A673 (cell line): ENCODE measurements at regions of chr10 and their contacts with region 1.

Region 1: GRCh38 chr10:63268798-63269503 is 135.8 kb downstream of the NRBF2 start:
- DNase-seq: peak; percentile 95
- H3K4me3 ChIP-seq: peak overlapping the region; percentile 56
- H3K27ac ChIP-seq: peak overlapping the region; percentile 90
- H3K4me1 ChIP-seq: peaks cover 18% of the 10 kb centered on the region
- H3K27me3 ChIP-seq: no peaks in the 10 kb centered on the region
- CTCF ChIP-seq: peak; percentile 41; the same call in 1 of the 2 replicates

Region 2: DNA sequence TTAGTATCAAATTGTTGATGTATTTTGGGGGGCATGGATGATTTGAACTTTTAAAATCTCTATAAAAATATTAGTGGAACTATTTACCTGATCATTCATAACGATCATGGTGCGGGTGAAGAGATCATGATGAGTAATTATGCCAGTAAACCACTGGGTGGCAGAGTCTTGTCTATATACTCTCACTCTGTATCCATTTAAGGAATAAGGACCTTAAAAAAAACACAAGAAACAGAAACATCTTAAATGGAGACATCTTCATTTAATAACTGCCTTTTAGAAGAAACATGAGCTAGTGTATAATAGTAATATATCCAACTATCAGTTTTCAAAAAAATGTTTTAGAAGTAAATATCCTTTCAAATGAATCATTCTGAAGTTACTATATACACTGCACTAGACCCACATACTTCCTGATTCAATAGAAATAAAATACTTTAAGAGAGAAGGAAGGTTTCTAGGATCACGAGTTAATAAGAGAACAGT is 51.8 kb before region 1 on chr10:
- CTCF ChIA-PET with region 1: no interaction called
- POLR2A ChIA-PET with region 1: no interaction called
- intact Hi-C with region 1: loop called (anchors 5 kb)
- DNase-seq: peak; percentile 71
- H3K4me3 ChIP-seq: no peak overlapping the region
- H3K27ac ChIP-seq: no peak overlapping the region
- H3K4me1 ChIP-seq: peaks cover 42% of the 10 kb centered on the region
- H3K27me3 ChIP-seq: no peaks in the 10 kb centered on the region
- CTCF ChIP-seq: peak; percentile 80

Region 3: DNA sequence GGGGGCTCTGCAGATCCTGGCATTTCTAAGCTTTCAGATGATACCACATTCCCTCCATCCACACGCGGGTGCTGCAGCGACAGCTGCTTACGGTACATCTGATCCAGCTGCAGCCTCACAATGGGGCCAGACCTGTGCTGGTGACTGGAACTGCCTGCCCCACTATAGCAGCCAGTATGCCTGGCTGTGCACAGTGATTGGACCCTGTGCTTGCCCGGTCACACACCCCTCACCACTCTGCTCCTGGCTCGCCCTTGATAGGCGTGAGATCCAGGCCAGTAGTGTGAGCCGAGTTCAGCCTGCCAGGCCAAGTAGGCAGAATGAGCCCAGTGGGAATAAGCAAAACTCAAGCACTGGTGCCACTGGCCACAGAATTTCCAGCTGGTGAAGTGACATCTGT is 29.0 kb after region 1 on chr10:
- CTCF ChIA-PET with region 1: no interaction called
- POLR2A ChIA-PET with region 1: no interaction called
- intact Hi-C with region 1: no loop called
- DNase-seq: no peak
- H3K4me3 ChIP-seq: no peak overlapping the region
- H3K27ac ChIP-seq: no peak overlapping the region
- H3K4me1 ChIP-seq: no peaks in the 10 kb centered on the region
- H3K27me3 ChIP-seq: no peaks in the 10 kb centered on the region
- CTCF ChIP-seq: no peak

Region 4: DNA sequence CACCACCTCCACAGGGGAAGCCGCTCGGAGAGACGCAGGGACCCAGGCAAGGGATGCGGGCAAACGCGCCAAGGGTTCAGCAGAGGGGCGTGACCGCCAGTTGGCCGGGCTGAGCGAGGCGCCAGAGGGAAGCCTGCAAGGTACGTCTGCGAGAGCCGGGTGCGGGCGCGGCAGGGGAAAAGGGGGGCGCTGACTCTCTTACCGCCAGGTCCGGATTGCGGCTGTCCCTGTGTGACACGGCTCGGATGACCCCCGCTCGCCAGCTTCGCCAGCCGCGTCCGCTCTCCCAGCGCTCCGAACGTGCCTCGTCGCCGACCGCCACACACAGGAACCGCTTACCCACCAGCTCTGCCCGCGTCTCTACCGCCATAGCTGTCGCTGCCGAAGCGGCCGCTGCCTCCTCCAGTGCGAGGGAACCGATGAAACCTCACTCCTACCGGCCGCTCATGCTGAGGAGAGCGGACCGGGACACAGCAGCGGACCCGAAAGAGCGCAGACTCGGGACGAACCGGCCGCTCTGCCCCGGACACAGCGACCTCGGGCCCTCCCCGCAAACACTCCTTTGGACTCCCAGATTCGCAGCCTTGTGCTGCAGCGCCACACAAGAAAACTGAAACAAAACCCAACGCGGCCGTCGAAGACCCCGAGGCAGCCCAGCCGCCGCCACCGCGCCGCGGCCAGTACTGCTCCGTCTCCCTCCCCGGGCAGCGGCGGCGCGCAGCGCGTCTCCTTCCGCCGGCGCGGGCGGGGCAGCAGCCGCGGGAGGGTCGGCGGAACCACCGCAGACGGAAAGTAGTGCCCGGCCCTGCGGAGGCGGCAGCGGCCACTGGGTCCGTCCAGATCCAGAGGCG is 196.6 kb after region 1 on chr10 and contains the start of gene JMJD1C:
- CTCF ChIA-PET with region 1: no interaction called
- POLR2A ChIA-PET with region 1: no interaction called
- intact Hi-C with region 1: loop called (anchors 5 kb)
- DNase-seq: peak; percentile 87
- H3K4me3 ChIP-seq: peak within 1 kb of the TSS; percentile 87
- H3K27ac ChIP-seq: peak within 1 kb of the TSS; percentile 84
- H3K4me1 ChIP-seq: peaks cover 36% of the 10 kb centered on the region
- H3K27me3 ChIP-seq: no peaks in the 10 kb centered on the region
- CTCF ChIP-seq: no peak
- total RNA-seq, gene JMJD1C: 68.2 and 71.4 TPM in 2 replicates

Region 5: DNA sequence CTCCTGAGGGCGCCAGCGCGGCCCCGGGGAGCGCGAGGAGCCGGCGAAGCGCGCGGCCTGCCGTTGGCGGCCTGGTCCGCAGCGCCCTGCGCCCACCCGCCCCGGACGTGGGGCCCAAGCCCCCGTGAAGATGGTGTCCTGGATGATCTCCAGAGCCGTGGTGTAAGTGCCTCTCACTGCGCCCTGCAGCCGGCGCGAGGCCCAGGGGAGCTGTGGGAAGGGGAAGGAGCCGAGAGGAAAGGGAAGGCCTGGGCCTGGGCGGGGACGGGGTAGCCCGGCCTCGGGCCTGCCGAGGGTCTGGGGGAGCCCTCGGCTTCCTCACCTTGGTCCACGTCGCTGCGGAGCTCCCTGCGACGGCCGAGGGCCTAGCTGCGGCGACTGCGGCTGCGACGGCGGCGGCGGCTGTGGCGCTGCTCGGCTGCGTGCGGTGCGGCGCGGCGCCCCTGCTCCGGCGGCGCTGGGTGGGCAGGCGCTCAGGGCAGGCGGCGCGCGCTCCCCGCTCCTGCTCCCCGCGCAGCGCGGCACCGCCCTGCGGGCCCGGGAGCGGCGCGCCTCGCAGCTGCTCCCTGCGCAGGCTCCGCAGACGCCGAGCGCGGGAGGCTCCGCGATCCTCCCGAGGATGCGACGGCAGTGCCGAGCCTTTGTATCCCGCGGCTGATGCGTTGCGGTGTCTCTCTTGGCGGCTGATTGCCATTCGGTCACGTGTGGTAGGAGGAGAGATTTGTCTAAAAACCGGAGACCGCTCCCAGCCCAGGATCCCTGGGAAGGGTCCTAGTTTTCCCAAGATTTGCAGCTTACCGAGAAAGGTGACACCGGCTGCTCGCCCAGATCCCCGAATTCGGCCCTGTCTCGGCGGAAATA is 252.7 kb after region 1 on chr10:
- CTCF ChIA-PET with region 1: no interaction called
- POLR2A ChIA-PET with region 1: interaction called, 5 read pairs
- intact Hi-C with region 1: loop called (anchors 5 kb)
- DNase-seq: peak; percentile 89
- H3K4me3 ChIP-seq: peak overlapping the region; percentile 63
- H3K27ac ChIP-seq: peak overlapping the region; percentile 97
- H3K4me1 ChIP-seq: peaks cover 45% of the 10 kb centered on the region
- H3K27me3 ChIP-seq: no peaks in the 10 kb centered on the region
- CTCF ChIP-seq: no peak

Region 6: DNA sequence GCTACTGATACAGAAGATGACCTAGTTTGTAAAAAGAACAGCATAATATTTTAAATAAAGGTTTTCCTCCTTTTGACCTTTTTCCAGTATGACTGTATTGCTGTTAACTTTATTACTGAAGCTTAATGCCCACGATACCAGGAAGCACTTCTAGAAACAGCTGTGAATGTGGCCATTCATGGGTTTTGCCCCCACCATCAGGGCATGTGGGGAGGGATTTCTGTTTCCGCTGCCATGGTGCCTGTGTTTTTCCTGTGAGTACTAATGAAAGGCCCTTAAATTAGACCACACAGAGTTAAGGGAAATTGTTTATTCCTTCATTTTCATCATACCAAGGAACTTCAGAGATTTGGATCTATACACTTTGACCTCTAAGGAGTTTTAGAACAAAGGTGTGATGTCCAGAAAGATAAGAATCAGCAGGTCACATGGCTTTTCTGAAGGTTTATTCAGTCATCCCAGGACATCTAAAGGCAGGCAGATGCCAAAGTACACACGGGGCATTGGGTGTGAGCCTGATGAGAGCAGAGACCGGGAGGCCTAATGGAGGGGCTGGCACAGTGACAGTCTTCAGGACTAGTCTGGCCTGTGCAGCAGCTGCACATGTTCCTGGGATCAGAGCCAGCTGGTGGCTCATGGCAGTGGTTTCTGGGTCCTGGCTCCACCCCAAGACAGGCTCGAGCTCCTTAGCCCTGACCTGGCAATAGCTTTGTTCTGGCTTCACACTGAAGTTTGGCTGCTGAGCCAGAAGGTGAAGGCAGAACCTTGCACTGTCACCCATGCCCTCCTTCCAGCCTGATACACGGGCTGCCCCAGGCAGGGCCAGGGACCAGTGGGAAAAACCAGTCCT is 443.1 kb after region 1 on chr10:
- CTCF ChIA-PET with region 1: no interaction called
- POLR2A ChIA-PET with region 1: no interaction called
- intact Hi-C with region 1: loop called (anchors 10 kb)
- DNase-seq: peak; percentile 93
- H3K4me3 ChIP-seq: no peak overlapping the region
- H3K27ac ChIP-seq: peak overlapping the region; percentile 79
- H3K4me1 ChIP-seq: peaks cover 58% of the 10 kb centered on the region
- H3K27me3 ChIP-seq: no peaks in the 10 kb centered on the region
- CTCF ChIP-seq: no peak